MCF 10A (cell line): ENCODE measurements at regions of chrX and their contacts with region 1.

Region 1: GRCh38 chrX:11143931-11144678 is 33.0 kb downstream of the HCCS start:
- DNase-seq: peak; percentile 88
- H3K4me3 Mint-ChIP-seq: no peak overlapping the region
- H3K27ac Mint-ChIP-seq: no peak overlapping the region
- H3K4me1 Mint-ChIP-seq: no peaks in the 10 kb centered on the region
- H3K27me3 Mint-ChIP-seq: peaks cover 53% of the 10 kb centered on the region
- CTCF ChIP-seq: peak; percentile 55

Region 2: GRCh38 chrX:11105080-11105479 is 39.0 kb before region 1 on chrX:
- CTCF ChIA-PET with region 1: no interaction called
- POLR2A ChIA-PET with region 1: no interaction called
- intact Hi-C with region 1: no loop called
- DNase-seq: peak; percentile 54
- H3K4me3 Mint-ChIP-seq: no peak overlapping the region
- H3K27ac Mint-ChIP-seq: no peak overlapping the region
- H3K4me1 Mint-ChIP-seq: no peaks in the 10 kb centered on the region
- H3K27me3 Mint-ChIP-seq: no peaks in the 10 kb centered on the region
- CTCF ChIP-seq: no peak

Region 3: GRCh38 chrX:11164433-11164832 is 20.3 kb after region 1 on chrX:
- CTCF ChIA-PET with region 1: no interaction called
- POLR2A ChIA-PET with region 1: no interaction called
- intact Hi-C with region 1: no loop called
- DNase-seq: no peak
- H3K4me3 Mint-ChIP-seq: no peak overlapping the region
- H3K27ac Mint-ChIP-seq: no peak overlapping the region
- H3K4me1 Mint-ChIP-seq: no peaks in the 10 kb centered on the region
- H3K27me3 Mint-ChIP-seq: peaks cover 25% of the 10 kb centered on the region
- CTCF ChIP-seq: no peak

Region 4: DNA sequence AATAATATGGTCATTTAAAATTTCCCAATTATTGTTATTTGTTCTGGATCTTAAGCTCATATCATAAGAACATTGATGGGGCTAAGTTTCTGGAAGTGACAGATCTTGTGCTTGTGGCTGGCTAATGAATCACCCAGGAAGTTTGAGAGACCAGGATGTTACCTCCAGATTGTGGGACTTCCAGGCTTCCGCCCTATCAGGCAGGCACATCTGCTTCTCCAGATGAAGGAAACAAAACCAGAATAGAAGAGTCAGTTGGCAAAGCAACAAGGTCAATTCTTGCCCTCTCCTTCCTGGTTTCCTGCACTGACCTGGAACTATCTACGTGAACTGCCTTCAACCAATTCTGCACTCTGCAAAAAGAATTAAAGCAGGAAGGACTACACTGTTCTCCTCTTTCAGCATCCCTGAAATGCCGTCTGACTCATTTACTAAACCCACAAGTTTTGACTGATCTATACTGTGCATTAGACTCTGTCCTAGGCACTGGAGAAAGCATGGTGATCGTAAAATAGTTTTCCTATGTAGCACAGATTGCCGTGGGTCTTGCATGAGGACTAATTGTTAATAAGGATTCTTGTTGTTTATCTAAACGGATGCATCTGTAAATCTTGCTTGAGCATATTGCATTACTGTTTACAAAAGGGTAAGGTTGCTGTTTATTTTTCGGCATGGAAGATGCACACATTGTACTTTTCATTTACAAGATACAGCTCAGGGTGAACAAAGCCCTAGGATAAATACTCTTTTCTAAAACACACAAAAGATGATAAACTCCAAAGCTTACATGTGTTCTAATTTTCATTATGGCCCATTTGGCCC is 223.7 kb after region 1 on chrX:
- CTCF ChIA-PET with region 1: interaction called, 3 read pairs
- POLR2A ChIA-PET with region 1: no interaction called
- intact Hi-C with region 1: loop called (anchors 1 kb)
- DNase-seq: no peak
- H3K4me3 Mint-ChIP-seq: no peak overlapping the region
- H3K27ac Mint-ChIP-seq: no peak overlapping the region
- H3K4me1 Mint-ChIP-seq: no peaks in the 10 kb centered on the region
- H3K27me3 Mint-ChIP-seq: peaks cover 14% of the 10 kb centered on the region
- CTCF ChIP-seq: no peak

Region 5: DNA sequence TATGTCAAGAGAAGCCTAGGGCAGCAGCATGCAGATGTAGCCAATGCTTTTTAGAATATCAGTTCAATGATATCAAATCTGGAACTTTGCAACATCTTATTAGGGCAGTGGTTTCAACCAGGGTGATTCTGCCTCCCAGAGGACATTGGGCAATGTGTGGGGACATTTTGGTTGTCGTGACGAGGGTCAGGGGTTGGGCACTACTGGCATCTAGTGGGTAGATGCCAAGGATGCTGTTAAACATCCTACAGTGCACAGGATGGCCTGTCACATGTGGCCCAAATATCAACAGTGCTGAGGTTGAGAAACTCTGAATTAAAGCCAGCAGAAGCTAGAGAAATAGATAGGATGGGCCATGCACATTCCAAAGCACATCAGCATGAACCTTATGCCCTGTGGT is 301.4 kb after region 1 on chrX:
- CTCF ChIA-PET with region 1: interaction called, 3 read pairs
- POLR2A ChIA-PET with region 1: no interaction called
- intact Hi-C with region 1: loop called (anchors 1 kb)
- DNase-seq: no peak
- H3K4me3 Mint-ChIP-seq: no peak overlapping the region
- H3K27ac Mint-ChIP-seq: no peak overlapping the region
- H3K4me1 Mint-ChIP-seq: peaks cover 8% of the 10 kb centered on the region
- H3K27me3 Mint-ChIP-seq: peaks cover 57% of the 10 kb centered on the region
- CTCF ChIP-seq: no peak

Region 6: DNA sequence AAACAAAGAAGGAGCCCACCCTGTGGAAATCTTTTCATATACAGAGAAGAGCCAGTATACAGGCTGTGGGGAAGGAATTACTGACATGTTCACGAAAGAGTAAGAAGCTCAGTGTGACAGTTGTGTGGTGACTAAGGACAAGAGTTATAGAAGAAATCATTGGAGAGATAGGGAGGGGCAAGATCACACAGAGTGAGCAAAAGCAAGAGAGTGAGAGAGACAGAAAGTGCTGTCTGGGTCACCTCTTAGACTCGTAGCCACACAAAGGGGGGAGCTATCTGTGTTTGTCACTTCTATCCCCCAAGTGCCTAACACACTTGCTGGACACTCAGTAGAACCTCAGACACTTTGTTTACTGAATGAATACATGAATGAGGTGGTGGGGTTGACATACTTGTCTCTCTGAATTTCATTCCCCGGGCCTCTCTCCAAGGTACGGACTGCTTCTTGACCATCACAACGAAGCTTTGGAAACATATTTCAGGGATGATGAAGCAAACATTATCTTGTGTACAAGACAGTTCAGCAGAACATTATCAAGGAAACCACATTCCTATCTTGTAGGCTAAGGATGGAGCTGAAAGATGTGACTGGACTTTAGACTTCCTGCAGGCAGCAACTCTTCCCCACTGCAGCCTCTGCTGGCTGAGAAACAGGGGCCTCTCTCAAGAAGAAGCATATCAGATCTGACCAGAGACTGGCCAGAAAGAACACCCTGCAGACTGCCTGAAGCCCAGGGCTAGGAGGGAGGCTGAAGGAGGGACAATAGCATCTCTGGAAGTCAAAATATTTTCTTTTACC is 317.3 kb after region 1 on chrX:
- CTCF ChIA-PET with region 1: no interaction called
- POLR2A ChIA-PET with region 1: no interaction called
- intact Hi-C with region 1: loop called (anchors 5 kb)
- DNase-seq: no peak
- H3K4me3 Mint-ChIP-seq: no peak overlapping the region
- H3K27ac Mint-ChIP-seq: no peak overlapping the region
- H3K4me1 Mint-ChIP-seq: peaks cover 17% of the 10 kb centered on the region
- H3K27me3 Mint-ChIP-seq: peaks cover 33% of the 10 kb centered on the region
- CTCF ChIP-seq: no peak

Region 7: DNA sequence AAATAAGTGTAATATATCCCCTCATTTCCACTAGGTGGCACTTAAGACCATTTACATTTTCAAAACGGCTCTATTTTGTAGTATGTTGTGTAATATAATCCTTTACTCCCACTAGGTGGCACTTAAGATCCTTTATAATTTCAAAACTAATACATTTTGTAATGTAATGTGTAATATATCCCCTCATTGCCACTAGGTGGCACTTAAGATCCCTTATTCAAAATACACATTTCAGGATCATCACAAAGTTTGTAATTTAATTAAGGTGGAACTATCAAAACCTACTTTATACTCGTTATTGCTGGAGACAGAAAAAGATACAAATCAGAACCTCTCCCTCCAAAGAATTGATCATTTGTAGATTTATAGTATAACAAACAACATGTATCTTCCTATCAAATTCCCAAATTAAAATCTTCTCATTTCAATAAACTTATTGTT is 389.1 kb after region 1 on chrX:
- CTCF ChIA-PET with region 1: interaction called, 29 read pairs
- POLR2A ChIA-PET with region 1: no interaction called
- intact Hi-C with region 1: loop called (anchors 1 kb)
- DNase-seq: peak; percentile 78
- H3K4me3 Mint-ChIP-seq: no peak overlapping the region
- H3K27ac Mint-ChIP-seq: no peak overlapping the region
- H3K4me1 Mint-ChIP-seq: no peaks in the 10 kb centered on the region
- H3K27me3 Mint-ChIP-seq: peaks cover 20% of the 10 kb centered on the region
- CTCF ChIP-seq: peak; percentile 82

Region 8: DNA sequence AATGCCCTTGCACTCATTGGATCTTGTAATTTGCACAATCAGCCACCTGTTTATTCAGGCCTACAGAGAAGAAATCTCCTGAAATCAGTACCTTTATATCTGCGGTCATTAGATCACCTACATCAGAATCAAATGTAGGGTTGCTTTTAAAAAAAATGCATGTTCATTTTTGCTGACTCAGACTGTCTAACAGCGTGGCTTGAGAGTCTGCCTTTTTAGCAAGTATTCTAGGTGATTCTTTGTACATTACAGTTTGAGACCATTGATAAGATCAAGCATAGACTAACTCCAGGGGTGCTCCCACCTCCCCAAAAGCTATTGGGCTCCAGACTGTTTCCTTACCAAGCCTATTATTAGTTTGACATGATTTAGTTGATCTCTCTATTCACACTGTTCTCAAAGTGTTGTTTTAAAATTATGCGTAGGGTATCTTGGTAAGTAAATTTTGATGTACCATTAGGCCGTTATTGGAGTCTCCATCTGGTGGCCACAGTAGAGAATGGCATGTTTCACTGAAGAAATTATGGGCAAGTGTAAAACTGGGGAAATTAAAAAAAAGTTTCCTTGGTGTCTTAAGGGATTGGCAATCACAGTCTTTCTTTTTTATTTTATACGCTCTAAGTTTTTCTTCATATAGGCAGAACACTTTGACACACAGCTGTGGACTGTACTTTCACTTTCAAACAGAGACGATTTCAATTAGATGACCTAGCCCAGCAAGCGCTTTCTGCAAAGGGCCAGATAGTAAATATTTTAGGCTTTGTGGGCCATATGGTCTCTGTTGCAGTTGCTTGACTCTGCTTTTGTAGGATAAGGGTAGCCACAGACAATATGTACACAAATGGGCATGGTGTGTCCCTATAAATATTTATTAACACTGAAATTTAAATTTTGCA is 580.3 kb after region 1 on chrX:
- CTCF ChIA-PET with region 1: interaction called, 6 read pairs
- POLR2A ChIA-PET with region 1: no interaction called
- intact Hi-C with region 1: loop called (anchors 1 kb)
- DNase-seq: peak; percentile 58
- H3K4me3 Mint-ChIP-seq: no peak overlapping the region
- H3K27ac Mint-ChIP-seq: no peak overlapping the region
- H3K4me1 Mint-ChIP-seq: no peaks in the 10 kb centered on the region
- H3K27me3 Mint-ChIP-seq: peaks cover 44% of the 10 kb centered on the region
- CTCF ChIP-seq: peak; percentile 52

Region 9: DNA sequence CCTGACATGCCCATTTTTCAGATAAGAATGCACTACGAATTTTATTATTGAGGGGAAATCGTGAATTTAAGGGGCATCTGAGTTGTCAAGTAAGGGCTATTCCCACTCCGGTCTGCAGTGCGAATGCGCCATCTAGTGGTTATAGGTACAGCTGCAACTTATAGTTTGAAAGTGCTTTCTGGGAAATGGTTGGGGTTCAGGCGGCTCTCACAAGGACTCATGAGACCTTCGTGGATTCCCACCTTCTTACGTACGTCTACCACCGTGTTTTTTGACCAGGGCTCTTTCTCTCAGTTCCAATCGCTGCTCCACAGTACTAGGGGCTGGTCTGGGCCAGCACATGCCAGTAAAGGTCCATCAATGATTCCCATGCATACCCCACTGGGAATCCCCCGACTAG is 626.2 kb after region 1 on chrX:
- CTCF ChIA-PET with region 1: interaction called, 3 read pairs
- POLR2A ChIA-PET with region 1: no interaction called
- intact Hi-C with region 1: loop called (anchors 1 kb)
- DNase-seq: peak; percentile 72
- H3K4me3 Mint-ChIP-seq: no peak overlapping the region
- H3K27ac Mint-ChIP-seq: no peak overlapping the region
- H3K4me1 Mint-ChIP-seq: peaks cover 6% of the 10 kb centered on the region
- H3K27me3 Mint-ChIP-seq: peaks cover 11% of the 10 kb centered on the region
- CTCF ChIP-seq: peak; percentile 74